Heart right ventricle (tissue), 16 donors: ENCODE measurements at regions of chr20 and their contacts with region 1.

Region 1: DNA sequence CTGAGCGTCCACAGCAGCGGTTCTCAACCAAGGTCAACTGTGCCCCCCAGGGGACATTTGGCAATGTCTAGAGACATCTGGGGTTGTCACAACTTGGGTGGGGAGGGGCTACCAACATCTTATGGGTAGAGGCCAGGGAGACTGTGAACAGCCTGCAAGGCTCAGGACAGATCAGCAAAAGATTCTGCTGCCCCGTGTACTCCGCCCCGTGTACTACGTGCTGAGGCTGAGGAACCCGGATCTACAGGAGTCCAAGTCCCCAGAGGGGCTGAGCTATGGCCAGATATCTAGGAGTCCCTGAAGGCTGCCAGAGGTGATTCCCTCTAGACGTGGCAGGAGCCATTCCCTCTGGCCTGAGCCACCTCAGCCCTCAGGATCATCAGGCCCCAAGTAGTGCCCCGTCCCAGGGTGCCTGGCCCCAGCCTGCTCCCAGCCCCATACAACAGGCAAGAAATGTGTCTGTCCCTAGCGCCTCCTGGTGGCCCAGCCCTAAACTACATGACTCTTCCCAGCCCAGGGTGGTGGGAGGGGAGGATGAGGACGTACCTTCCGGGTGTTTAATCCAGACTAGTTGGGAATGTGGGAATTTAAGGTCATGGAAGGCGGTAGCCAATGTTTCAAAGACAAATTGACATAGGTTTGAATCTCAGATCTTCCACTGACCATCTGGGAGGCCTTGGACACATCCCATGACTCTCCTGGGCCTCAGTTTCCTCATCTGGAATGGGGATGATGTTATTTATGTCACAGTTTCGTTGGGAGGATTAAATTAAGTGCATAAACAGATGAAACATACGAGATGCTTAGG is 49.5 kb upstream of the PTPN1 start:
- DNase-seq: peak; percentile 86 to 90
- ATAC-seq: peak; percentile 87 to 92 (median 90)
- H3K4me3 ChIP-seq: no peak overlapping the region
- H3K27ac ChIP-seq: peak overlapping the region in 9 of 10 donors; percentile 41 to 70 (median 52)
- H3K4me1 ChIP-seq: peaks cover 6 to 44% (median 22%) of the 10 kb centered on the region in 9 donors
- H3K27me3 ChIP-seq: no peaks in the 10 kb centered on the region
- CTCF ChIP-seq: peak; percentile 71 to 97 (median 94)

Region 2: GRCh38 chr20:50115591-50116372 is 344.9 kb before region 1 on chr20:
- intact Hi-C with region 1: loop called in 1 of 10 experiments (anchors 10 kb)
- DNase-seq: peak; percentile 95 to 98
- ATAC-seq: peak; percentile 84 to 95 (median 90)
- H3K4me3 ChIP-seq: peak overlapping the region in 9 of 10 donors; percentile 37 to 63 (median 57)
- H3K27ac ChIP-seq: peak overlapping the region in 9 of 10 donors; percentile 59 to 86 (median 72)
- H3K4me1 ChIP-seq: peaks cover 18 to 48% (median 38%) of the 10 kb centered on the region in 9 donors
- H3K27me3 ChIP-seq: no peaks in the 10 kb centered on the region
- CTCF ChIP-seq: no peak

Region 3: GRCh38 chr20:50308513-50309279 is 152.0 kb before region 1 on chr20:
- intact Hi-C with region 1: loop called in 2 of 10 experiments (anchors 10 kb)
- DNase-seq: peak; percentile 89 to 90
- ATAC-seq: peak; percentile 57 to 92 (median 80)
- H3K4me3 ChIP-seq: peak overlapping the region in 7 of 10 donors; percentile 0 to 43 (median 28)
- H3K27ac ChIP-seq: peak overlapping the region; percentile 67 to 96 (median 90)
- H3K4me1 ChIP-seq: peaks cover 28 to 90% (median 67%) of the 10 kb centered on the region in 9 donors
- H3K27me3 ChIP-seq: no peaks in the 10 kb centered on the region
- CTCF ChIP-seq: peak in 7 of 9 donors; percentile 8 to 52 (median 30)

Region 4: DNA sequence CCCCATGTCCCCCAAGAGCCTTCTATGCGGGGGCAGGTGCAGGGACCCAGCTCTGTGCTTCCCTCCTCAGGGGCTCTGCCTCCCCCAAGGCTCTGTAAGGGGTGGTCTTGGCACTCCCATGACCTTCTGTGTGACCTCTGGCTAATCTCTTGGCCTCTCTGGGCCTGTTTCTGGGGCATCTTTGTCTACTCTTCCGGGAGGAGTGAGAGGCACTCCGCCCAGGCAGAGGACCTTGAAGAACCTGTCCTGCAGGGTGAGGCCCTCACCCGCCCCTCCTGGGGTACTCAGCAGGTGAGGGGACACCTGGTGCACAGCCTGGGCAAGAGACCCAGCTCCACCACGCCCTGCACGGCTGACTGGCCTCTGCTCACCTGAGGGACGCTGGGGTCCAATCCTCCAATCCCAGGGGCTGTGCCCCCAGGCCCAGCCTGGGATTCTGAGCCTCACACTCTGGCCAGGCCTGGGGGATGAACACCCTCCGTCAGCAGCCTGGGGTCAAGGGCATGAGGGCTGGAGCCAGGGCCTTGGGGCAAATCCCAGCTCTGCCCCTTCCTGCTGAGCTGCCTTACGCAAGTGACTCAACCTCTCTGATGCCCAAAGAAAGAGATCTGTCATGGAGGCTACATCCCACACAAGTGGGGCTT is 100.5 kb before region 1 on chr20:
- intact Hi-C with region 1: no loop called
- DNase-seq: no peak
- ATAC-seq: peak in 1 of 8 donors; percentile 15
- H3K4me3 ChIP-seq: no peak overlapping the region
- H3K27ac ChIP-seq: no peak overlapping the region
- H3K4me1 ChIP-seq: no peaks in the 10 kb centered on the region
- H3K27me3 ChIP-seq: no peaks in the 10 kb centered on the region
- CTCF ChIP-seq: no peak

Region 5: DNA sequence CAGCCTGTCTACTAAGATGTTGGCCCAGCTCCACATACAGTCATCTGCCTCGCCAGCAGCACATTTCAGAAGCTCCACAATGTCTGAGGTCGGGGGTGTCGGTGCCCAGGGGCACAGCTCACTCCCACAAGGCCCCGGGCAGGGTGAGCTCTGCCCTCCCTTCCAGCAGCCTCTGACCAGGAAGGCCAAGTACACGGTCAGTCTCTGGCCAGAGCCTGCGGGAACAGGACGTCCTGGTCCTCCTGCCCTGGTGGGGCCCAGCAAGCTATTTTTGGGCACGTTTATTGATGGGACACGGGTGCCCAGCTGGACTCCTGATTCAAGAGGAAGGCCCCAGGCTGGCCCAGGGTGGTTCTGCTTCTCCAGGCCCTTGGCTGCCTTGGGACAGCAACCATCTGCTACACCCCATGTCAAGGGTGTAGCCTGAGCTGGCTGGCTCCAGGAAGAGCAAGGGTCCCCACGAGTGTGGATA is 65.4 kb before region 1 on chr20:
- intact Hi-C with region 1: loop called in 9 of 10 experiments (anchors 1 to 10 kb)
- DNase-seq: peak; percentile 44 to 79
- ATAC-seq: peak in 7 of 8 donors; percentile 33 to 86 (median 78)
- H3K4me3 ChIP-seq: no peak overlapping the region
- H3K27ac ChIP-seq: peak overlapping the region; percentile 77 to 91 (median 82)
- H3K4me1 ChIP-seq: peaks cover 0 to 60% (median 37%) of the 10 kb centered on the region in 9 donors
- H3K27me3 ChIP-seq: no peaks in the 10 kb centered on the region
- CTCF ChIP-seq: no peak

Region 6: DNA sequence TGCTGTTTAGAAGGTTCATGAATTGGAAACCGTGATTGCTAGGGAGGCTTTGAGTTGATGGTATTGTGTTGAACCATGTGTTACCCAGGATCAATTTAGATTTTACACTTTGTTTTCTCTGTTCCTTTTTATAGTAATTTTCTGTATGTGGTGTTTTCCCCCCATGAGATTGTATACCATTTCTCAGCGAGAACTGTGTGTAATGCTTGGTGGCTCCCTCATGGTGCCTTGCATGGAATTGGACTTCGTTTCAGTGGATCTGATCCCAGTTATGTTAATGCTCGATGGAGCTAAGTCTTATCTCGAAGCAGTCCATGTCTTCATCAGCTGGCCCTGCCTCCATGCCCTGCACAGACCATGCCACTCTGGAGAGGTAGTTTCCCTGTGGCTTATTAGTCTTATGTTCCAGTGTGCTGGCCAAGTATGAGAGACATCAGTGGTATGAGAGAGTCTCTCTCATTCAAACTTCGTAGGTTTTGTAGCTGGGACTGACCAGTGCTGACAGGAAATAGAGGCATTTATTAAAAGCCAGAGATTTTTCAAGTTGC is 68.2 kb after region 1 on chr20:
- intact Hi-C with region 1: no loop called
- DNase-seq: no peak
- ATAC-seq: peak in 6 of 8 donors; percentile 57 to 82 (median 68)
- H3K4me3 ChIP-seq: no peak overlapping the region
- H3K27ac ChIP-seq: peak overlapping the region in 3 of 10 donors; percentile 11 to 29 (median 13)
- H3K4me1 ChIP-seq: peaks cover 6 to 89% (median 59%) of the 10 kb centered on the region in 9 donors
- H3K27me3 ChIP-seq: no peaks in the 10 kb centered on the region
- CTCF ChIP-seq: no peak

Region 7: DNA sequence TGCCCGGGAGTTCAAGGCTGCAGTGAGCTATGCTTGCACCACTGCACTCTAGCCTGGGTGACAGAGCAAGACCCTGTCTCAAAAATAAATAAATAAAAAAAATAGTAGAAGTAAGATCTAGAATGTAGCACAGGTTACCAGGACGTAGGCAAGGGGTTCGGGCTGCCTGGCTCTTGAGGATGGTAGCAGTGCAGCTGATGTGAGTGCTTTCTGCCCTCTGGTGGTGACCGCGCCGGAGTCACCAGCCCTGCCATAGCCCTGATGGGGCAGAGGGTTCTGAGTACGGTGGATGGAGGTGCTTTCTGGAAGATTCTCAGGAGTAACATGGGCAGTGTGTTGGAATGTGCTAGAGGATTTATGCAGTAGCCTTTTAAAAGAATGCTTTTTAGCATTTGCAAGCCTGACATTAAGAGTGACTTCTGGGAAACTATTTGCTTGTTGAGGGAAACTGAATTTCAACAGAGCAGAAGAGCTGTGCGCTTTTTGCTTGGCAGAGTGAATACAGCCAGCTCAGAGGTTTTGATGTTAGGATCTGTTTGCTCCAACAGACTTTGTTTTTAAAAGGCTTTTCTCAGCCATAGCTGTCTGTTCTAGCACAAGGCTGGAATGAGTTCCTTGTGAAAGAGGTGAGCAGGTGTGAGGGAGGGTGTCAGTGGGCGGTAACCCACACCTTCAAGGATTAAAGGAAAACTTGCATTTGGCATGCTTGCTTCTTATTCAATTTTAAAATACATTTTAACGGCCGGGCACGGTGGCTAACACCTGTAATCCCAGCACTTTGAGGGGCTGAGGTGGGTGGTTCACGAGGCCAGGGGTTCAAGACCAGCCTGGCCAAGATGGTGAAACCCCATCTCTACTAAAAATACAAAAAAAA is 115.4 kb after region 1 on chr20:
- intact Hi-C with region 1: loop called in 7 of 10 experiments (anchors 2 to 5 kb)
- DNase-seq: peak; percentile 61 to 71
- ATAC-seq: peak; percentile 52 to 75 (median 66)
- H3K4me3 ChIP-seq: no peak overlapping the region
- H3K27ac ChIP-seq: peak overlapping the region in 7 of 10 donors; percentile 2 to 73 (median 38)
- H3K4me1 ChIP-seq: peaks cover 10 to 66% (median 44%) of the 10 kb centered on the region in 9 donors
- H3K27me3 ChIP-seq: no peaks in the 10 kb centered on the region
- CTCF ChIP-seq: peak; percentile 34 to 81 (median 72)